Head of caudate nucleus (tissue), 42 donors: ENCODE measurements at regions of chr7 and their contacts with region 1.

Region 1: GRCh38 chr7:139494835-139495579 is 11.5 kb upstream of the KLRG2 start:
- DNase-seq: peak in 37 of 42 donors; percentile 7 to 83 (median 47)

Region 2: GRCh38 chr7:139023076-139023475 is 471.9 kb before region 1 on chr7:
- intact Hi-C with region 1: no loop called
- DNase-seq: no peak

Region 3: GRCh38 chr7:139618482-139619366 is 123.7 kb after region 1 on chr7:
- intact Hi-C with region 1: loop called (anchors 5 kb)
- DNase-seq: peak; percentile 31 to 84 (median 65)